ENCODE measurements at regions of chr14 and their contacts with region 1.

Region 1: DNA sequence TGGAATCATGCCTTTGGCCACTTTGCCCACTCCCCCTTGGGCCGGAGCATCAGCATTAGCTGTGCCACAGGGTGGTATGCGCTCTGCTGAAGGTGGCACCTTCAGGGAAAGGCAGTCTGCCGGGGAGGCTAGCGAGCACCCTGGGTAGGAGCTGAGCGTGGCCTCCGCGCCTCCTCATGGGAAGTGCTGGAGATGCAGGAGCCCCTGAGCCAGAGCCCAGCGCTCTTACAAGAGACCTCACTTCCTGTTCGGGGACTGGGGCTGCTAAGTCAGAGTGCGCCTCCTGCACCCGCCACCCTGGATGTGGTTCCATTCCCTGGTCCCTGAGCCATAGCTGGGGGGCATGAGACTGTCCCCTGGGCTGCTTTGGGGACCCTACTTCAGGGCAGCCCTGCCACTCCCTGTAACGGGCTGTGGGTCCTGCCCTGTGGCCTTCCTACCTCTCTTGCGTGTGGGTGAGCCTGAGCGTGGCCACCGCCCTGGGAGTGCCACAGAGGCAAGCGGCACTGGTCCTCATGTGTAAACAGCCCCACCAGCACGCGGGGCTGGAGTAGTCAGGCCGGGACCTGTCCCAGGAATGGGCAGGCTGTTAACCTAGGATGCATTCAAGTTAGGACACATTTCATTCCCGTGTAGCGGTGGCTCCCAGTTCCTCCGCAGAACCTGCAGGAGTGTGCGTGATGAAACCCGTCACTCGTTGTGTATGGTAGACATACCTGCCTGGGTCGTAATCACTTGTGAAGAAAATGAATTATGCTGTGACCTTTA is 19.4 kb downstream of the COA8 start:
- DNase-seq: peak; percentile 90
- H3K4me3 ChIP-seq: peak overlapping the region in 1 of 3 experiments; percentile 14
- H3K27ac ChIP-seq: peak overlapping the region; percentile 56
- H3K4me1 ChIP-seq: peaks cover 23% of the 10 kb centered on the region
- H3K27me3 ChIP-seq: no peaks in the 10 kb centered on the region
- CTCF ChIP-seq: peak in 1 of 2 donors; percentile 45

Region 2: GRCh38 chr14:103562429-103563225 is 19.5 kb before region 1 on chr14 and contains the starts of genes BAG5 and COA8:
- CTCF ChIA-PET with region 1: no interaction called
- dilution Hi-C with region 1: no loop called
- in situ Hi-C with region 1: no loop called
- intact Hi-C with region 1: loop called (anchors 1 kb)
- DNase-seq: peak; percentile 83
- H3K4me3 ChIP-seq: peak within 1 kb of the TSS; percentile 87 to 97 (median 96)
- H3K27ac ChIP-seq: peak within 1 kb of the TSS; percentile 82
- H3K4me1 ChIP-seq: peaks cover 16% of the 10 kb centered on the region
- H3K27me3 ChIP-seq: no peaks in the 10 kb centered on the region
- CTCF ChIP-seq: no peak
- total RNA-seq, gene BAG5: 31.3 to 39.0 TPM
- total RNA-seq, gene COA8: 22.3 to 49.3 TPM

Region 3: GRCh38 chr14:103628684-103629502 is 46.8 kb after region 1 on chr14 and contains the start of gene KLC1:
- CTCF ChIA-PET with region 1: no interaction called
- dilution Hi-C with region 1: no loop called
- in situ Hi-C with region 1: no loop called
- intact Hi-C with region 1: loop called (anchors 1 kb)
- DNase-seq: peak; percentile 73
- H3K4me3 ChIP-seq: peak within 1 kb of the TSS; percentile 82 to 94 (median 90)
- H3K27ac ChIP-seq: peak within 1 kb of the TSS; percentile 94
- H3K4me1 ChIP-seq: peaks cover 43% of the 10 kb centered on the region
- H3K27me3 ChIP-seq: no peaks in the 10 kb centered on the region
- CTCF ChIP-seq: no peak
- total RNA-seq, gene KLC1: 216 to 237 TPM

Measured in mammary epithelial cell (primary cell).